ENCODE measurements at regions of chr9 and their contacts with region 1.

Region 1: DNA sequence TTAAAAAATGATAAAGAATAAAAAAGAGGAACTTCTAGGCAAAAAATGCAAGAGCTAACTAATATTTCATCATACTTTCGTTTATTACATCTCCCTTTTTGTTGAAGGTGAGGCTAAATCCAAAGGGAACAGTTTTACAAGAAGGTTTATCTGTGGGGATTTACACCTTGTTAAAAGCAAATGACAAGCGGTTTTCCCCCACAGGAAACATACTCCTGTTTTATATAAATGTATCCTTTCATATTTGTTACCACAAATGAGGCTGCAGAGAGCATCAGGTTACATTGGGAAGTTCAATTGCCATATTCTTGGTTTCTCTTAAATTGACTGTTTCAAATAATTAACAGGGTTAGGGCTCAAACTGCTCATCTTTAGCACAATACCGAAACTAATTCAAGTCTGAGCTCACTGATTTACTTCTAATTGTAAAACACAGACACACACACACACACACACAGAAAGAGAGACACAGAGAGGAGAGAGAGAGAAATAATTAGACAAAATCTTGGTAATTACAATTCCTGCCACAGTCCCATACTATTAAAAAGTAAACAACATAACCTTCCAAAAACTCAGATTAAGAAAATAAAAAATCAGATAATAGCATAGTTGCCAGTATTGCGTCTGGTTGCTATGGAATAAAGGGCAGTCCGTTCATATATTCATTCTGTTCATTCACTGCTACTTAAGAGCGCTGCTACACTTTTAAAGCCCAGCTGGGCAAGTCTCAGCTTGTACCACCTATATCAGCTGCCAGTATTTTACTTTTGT is 17.1 kb downstream of the RFX3 start:
- H3K4me3 ChIP-seq: peak overlapping the region; percentile 6
- H3K27ac ChIP-seq: peak overlapping the region; percentile 18
- H3K4me1 ChIP-seq: peaks cover 9% of the 10 kb centered on the region
- CTCF ChIP-seq: no peak

Region 2: DNA sequence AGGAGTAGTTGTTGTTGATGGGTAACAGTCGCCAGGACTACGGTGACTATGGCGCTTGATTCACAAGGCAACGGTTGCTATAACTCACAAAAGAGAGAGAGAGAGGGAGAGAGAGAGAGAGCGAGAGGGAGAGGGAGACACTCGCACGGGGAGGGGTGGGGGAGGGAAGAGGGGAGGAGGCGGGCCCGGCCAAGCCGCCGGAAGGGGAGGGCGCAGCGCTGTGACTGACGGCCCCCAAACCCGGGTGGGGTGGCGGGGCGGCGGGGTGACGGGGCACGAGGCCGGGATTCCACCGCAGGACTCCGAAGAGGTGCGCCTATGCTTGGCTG is 17.1 kb after region 1 on chr9 and contains the start of gene RFX3:
- CTCF ChIA-PET with region 1: interaction called, 3 read pairs
- POLR2A ChIA-PET with region 1: interaction called, 33 read pairs
- H3K4me3 ChIP-seq: peak within 1 kb of the TSS; percentile 95
- H3K27ac ChIP-seq: peak within 1 kb of the TSS; percentile 100
- H3K4me1 ChIP-seq: peaks cover 2% of the 10 kb centered on the region
- CTCF ChIP-seq: no peak

Measured in HEK293 (cell line).